ENCODE measurements at regions of chr20 and their contacts with region 1.

Region 1: GRCh38 chr20:63309261-63310071 is 16.5 kb downstream of the COL20A1 start:
- DNase-seq: peak in 1 of 2 experiments; percentile 83
- H3K4me3 ChIP-seq: no peak overlapping the region
- H3K27ac ChIP-seq: no peak overlapping the region
- H3K4me1 ChIP-seq: no peaks in the 10 kb centered on the region; a peak in 2 of 7 replicates
- H3K27me3 ChIP-seq: no peaks in the 10 kb centered on the region
- CTCF ChIP-seq: peak; percentile 82 to 93 (median 93)
- EP300 ChIP-seq: no peak
- POLR2A ChIP-seq: no peak
- RAD21 ChIP-seq: peak; percentile 81 to 85

Region 2: DNA sequence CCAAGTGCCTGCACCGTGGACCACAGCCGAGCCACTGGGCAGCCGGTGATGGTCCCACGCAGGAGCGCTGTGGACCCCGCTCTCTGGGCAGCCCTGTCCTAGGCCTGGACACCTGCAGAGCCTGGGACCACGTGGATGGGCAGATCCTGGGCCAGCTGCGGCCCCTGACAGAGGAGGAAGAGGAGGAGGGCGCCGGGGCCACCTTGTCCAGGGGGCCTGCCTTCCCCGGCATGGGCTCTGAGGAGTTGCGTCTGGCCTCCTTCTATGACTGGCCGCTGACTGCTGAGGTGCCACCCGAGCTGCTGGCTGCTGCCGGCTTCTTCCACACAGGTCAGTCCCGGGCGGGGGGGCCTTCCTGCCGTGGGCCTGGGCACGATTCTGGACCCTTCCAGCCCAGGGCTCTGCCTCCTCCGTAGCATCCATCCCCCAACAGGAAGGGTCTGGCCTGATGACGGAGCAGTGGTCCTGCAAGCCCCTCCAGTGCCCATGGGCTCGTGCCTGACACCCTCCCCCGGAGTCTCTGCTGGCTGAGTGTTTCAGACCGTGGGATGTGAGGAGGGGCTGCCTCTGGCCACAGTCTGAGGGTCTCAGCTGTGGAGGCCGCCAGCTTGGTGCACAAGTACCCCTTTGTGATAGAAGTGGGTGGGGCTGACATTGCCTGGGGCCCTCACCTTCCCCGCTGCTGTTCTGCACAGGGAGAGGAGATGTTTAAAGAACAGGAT is 73.2 kb before region 1 on chr20:
- CTCF ChIA-PET with region 1: no interaction called
- POLR2A ChIA-PET with region 1: no interaction called
- DNase-seq: no peak
- H3K4me3 ChIP-seq: no peak overlapping the region
- H3K27ac ChIP-seq: no peak overlapping the region
- H3K4me1 ChIP-seq: peaks cover 0 to 19% (median 10%) of the 10 kb centered on the region in 4 experiments; a peak in 4 of 7 replicates
- H3K27me3 ChIP-seq: peaks cover 0 to 3% (median 1%) of the 10 kb centered on the region in 4 experiments; a peak in 1 of 7 replicates
- CTCF ChIP-seq: no peak
- EP300 ChIP-seq: no peak
- POLR2A ChIP-seq: no peak
- RAD21 ChIP-seq: no peak

Region 3: DNA sequence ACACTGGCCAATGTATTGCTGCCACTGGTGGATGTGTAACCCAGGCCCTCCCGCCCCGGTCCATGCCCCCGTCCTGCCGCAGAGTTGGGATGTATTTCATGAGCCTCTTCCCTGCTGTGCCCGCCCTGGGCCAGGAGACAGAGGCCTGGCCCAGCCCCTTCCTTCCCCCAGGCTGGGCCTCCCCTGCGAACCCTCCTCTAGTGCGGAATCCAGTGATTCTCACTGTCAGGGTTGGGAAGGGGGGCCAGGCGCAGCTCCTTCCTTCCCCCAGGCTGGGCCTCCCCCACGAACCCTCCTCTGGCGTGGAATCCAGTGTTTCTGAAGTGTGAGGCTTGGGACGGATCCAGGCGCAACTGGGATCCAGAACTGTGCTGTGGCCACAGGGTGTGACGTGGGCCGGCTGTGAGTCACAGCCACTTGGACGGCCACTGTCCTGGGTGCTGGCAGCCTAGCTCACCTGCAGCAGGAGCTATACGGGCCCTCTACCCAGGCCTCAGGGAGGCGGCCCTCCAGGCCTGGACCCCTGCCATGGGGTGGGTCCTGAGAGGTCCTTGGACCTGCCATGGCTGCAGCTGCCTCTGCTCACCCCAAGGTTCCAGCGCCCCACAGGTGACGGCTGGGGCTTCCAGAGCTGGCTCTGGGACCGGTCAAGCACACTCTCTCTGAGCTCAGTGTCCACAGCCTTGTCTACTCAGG is 11.8 kb after region 1 on chr20:
- CTCF ChIA-PET with region 1: interaction called, 45 read pairs
- POLR2A ChIA-PET with region 1: no interaction called
- DNase-seq: no peak
- H3K4me3 ChIP-seq: no peak overlapping the region
- H3K27ac ChIP-seq: no peak overlapping the region
- H3K4me1 ChIP-seq: no peaks in the 10 kb centered on the region; a peak in 1 of 7 replicates
- H3K27me3 ChIP-seq: no peaks in the 10 kb centered on the region
- CTCF ChIP-seq: no peak
- EP300 ChIP-seq: no peak
- POLR2A ChIP-seq: no peak
- RAD21 ChIP-seq: no peak

Region 4: DNA sequence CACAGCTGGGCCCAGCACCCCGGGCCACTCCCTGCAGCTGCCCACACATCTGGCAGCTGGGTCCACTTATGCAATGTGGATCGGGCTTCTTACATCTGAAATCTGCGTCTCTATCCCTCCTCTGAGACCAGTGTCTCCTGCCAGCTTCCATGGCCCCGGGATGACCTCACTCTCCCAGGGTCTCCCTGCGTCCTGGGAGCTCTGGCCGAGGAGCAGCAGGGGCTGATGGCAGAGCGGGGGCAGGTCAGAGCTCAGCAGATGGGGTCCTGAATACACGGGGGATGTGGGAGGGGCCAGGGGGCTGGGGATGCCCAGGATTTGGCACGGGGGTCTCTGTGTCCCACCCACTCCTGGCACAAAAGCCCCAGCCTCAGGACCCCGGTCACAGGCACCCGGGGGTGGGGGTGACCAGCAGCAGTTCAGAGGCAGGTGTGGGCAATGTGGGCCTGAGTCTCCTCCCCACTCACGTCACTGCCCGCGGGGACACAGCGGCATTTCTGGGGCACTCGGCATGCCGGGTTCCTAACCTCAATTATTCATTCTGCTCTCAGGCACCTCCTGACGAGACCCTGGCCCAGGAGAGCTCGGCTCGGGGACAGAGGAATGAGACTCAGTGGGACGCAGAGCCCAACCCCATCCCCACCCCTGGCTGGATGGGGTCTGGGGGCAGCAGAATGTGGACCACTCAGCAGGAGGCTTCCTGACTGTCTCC is 35.3 kb after region 1 on chr20:
- CTCF ChIA-PET with region 1: interaction called, 38 read pairs
- POLR2A ChIA-PET with region 1: no interaction called
- DNase-seq: no peak
- H3K4me3 ChIP-seq: no peak overlapping the region
- H3K27ac ChIP-seq: no peak overlapping the region
- H3K4me1 ChIP-seq: no peaks in the 10 kb centered on the region; a peak in 2 of 7 replicates
- H3K27me3 ChIP-seq: no peaks in the 10 kb centered on the region
- CTCF ChIP-seq: no peak
- EP300 ChIP-seq: no peak
- POLR2A ChIP-seq: no peak
- RAD21 ChIP-seq: no peak

Region 5: DNA sequence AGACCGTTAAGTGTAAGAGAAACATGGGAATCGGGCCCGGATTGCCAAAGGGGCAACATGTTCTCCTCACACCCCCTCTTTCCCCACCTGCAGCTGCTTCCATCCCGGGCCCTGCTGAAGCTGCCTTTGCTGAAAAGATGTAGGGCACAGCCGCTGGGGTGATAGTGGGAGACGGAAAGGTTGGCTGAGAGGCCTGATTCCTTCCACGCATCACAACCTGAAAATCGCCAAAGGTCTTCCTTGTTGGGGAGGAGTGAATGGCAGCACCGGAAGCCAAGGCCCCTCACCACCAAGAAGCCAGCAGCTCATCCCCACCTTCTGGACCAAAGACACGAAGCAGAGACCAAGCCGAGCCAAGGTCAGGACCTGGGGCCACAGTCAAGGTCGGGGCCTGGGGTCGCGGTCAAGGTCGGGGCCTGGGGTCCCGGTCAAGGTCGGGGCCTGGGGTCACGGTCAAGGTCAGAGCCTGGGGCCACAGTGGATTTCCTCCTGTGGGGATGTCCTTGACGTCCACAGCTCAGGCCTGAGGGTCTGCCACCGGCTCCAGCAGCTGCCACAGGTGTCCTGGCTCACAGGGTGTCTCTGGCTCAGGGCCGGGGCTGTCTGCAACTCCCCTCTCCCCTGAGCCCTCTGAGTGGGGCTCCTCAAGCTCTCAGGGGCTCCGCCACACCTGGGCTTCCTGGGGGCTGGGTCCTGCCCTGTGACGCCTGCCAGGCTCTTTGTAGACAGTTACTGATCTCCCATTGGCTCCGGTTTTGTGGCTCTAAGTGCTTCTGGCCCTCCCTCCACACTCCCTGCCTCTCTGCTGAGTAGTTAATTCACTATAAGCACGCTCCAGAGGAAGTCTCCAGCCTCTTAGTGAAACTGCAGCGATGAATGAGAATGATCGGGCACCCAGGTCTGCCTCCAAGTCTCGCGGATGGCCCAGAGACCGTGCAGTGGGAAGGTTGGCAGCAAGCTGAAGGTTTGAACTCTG is 57.2 kb after region 1 on chr20:
- CTCF ChIA-PET with region 1: interaction called, 17 read pairs
- POLR2A ChIA-PET with region 1: no interaction called
- DNase-seq: no peak
- H3K4me3 ChIP-seq: no peak overlapping the region
- H3K27ac ChIP-seq: no peak overlapping the region
- H3K4me1 ChIP-seq: peaks cover 0 to 19% (median 11%) of the 10 kb centered on the region in 4 experiments; a peak in 6 of 7 replicates
- H3K27me3 ChIP-seq: peaks cover 0 to 15% (median 9%) of the 10 kb centered on the region in 4 experiments; a peak in 4 of 7 replicates
- CTCF ChIP-seq: no peak
- EP300 ChIP-seq: no peak
- POLR2A ChIP-seq: no peak
- RAD21 ChIP-seq: no peak

Region 6: GRCh38 chr20:63409459-63410435 is 100.3 kb after region 1 on chr20:
- CTCF ChIA-PET with region 1: interaction called, 15 read pairs
- POLR2A ChIA-PET with region 1: no interaction called
- DNase-seq: peak in 1 of 2 experiments; percentile 72
- H3K4me3 ChIP-seq: peak overlapping the region in 2 of 4 experiments; percentile 24 to 52; a peak in 3 of 8 replicates
- H3K27ac ChIP-seq: peak overlapping the region; percentile 11; the same call in 1 of the 2 replicates
- H3K4me1 ChIP-seq: peaks cover 0 to 10% (median 7%) of the 10 kb centered on the region in 4 experiments; a peak in 4 of 7 replicates
- H3K27me3 ChIP-seq: no peaks in the 10 kb centered on the region
- CTCF ChIP-seq: no peak
- EP300 ChIP-seq: no peak
- POLR2A ChIP-seq: peak in 1 of 2 experiments; percentile 49; a peak in 1 of 3 replicates
- RAD21 ChIP-seq: no peak

Region 7: DNA sequence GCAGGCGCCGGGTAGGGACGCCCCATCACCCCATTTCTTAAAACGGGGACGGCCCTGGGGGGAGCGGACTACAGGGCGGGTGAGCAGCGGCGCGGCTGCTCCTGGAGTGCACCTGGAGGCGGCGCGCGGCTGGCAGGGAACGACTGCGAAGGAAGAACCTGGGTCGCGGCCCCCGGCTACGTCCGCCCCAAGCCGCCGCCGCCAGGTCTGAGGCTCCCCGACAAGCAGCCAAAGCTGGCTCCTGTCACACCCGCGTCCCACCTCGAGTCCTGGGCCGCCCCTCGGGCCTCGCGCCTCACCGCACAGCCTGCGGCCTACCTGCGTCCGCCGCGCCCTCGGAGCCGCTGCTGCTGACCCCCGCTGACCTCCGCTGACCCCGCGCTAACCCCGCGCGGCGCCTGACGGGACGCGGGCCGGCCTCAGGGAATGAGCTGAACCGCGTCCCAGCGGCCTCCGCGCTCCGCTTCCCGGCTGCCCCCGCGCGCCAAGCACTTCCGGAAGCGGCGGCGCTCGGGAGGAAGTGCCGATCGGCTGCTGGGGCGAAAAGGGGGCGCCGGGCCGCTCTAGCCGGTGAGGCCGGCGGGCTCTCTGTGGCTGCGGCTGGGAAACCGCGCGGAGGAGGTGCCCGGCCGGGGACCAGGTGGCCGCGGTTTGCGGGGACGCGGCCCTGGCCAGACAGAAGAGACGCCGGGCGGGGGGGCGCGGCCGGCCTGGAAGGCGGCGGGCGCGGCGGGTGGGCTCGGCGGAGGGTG is 398.3 kb after region 1 on chr20 and contains the starts of genes ARFRP1 and ZGPAT:
- CTCF ChIA-PET with region 1: no interaction called
- POLR2A ChIA-PET with region 1: no interaction called
- DNase-seq: peak in 1 of 2 experiments; percentile 93
- H3K4me3 ChIP-seq: peak within 1 kb of the TSS; percentile 46 to 88 (median 74)
- H3K27ac ChIP-seq: no peak within 1 kb of the TSS
- H3K4me1 ChIP-seq: peaks cover 0 to 11% (median 6%) of the 10 kb centered on the region in 4 experiments; a peak in 5 of 7 replicates
- H3K27me3 ChIP-seq: no peaks in the 10 kb centered on the region
- CTCF ChIP-seq: no peak
- EP300 ChIP-seq: no peak
- POLR2A ChIP-seq: peak in 1 of 2 experiments; percentile 53; a peak in 1 of 3 replicates
- RAD21 ChIP-seq: 0 out of 4 replicates have a peak, but pooled peaks of 1 of the 2 experiments have one; percentile 0
- total RNA-seq, gene ARFRP1: 21.9 and 22.9 TPM in 2 replicates
- total RNA-seq, gene ZGPAT: 21.4 and 24.9 TPM in 2 replicates

Measured in H1 (cell line).